CD4-positive, alpha-beta memory T cell (primary cell): ENCODE measurements at regions of chr16 and their contacts with region 1.

Region 1: GRCh38 chr16:67246934-67247697 is at the start of gene FHOD1:
- DNase-seq: peak; percentile 92 to 96 (median 93)
- H3K4me3 ChIP-seq: peak within 1 kb of the TSS; percentile 73 to 85
- H3K4me3 Mint-ChIP-seq: peak within 1 kb of the TSS; percentile 84 to 95 (median 91)
- H3K27ac ChIP-seq: peak within 1 kb of the TSS; percentile 82
- H3K27ac Mint-ChIP-seq: peak within 1 kb of the TSS; percentile 84 to 100 (median 95)
- H3K4me1 ChIP-seq: peaks cover 57% of the 10 kb centered on the region
- H3K4me1 Mint-ChIP-seq: peaks cover 26 to 61% (median 44%) of the 10 kb centered on the region in 4 donors
- H3K27me3 ChIP-seq: no peaks in the 10 kb centered on the region
- H3K27me3 Mint-ChIP-seq: peaks cover 1 to 3% of the 10 kb centered on the region in 2 donors
- total RNA-seq, gene FHOD1: 56.0 to 63.3 TPM

Region 2: DNA sequence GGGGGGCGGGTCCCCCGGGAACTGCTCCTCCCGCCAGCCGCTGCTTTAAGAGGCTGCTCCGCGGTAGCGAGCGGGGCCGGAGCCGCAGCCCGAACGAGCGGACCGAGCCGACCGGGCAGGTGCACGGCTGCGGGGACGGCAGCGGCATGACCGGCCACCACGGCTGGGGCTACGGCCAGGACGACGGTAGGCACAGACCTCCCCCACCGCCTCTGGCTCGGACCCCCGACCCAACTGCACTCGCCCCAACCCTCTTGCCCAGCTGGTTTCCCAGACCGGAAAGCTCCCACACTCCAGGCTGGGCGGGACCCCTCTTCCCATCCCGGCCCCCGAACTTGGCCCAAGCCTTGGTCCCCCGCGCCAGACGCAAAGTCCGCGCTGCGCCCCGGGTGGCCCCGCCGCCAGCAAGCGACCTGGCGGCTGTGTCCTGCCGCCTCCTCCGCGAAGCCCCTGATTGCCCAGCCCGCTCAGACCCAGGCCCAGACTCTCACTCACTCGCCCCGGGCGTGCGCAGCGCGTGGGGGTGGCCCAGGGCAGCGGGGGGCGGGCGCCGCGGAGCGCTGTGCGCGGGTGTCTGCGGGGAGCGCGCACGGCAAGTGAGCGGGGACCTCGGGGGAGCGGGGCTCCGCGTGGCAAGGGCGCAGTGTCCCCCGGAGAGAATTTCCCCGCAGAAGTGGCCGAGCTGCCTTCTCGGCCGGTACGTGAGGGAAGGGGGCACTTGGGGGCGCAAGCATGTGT is 402.6 kb before region 1 on chr16 and contains the start of gene CA7:
- CTCF ChIA-PET with region 1: no interaction called
- POLR2A ChIA-PET with region 1: no interaction called
- intact Hi-C with region 1: no loop called
- DNase-seq: no peak
- H3K4me3 ChIP-seq: no peak within 1 kb of the TSS
- H3K4me3 Mint-ChIP-seq: peak within 1 kb of the TSS in 7 of 8 donors; percentile 27 to 80 (median 68)
- H3K27ac ChIP-seq: no peak within 1 kb of the TSS
- H3K27ac Mint-ChIP-seq: no peak within 1 kb of the TSS
- H3K4me1 ChIP-seq: no peaks in the 10 kb centered on the region
- H3K4me1 Mint-ChIP-seq: peaks cover 2 to 10% (median 8%) of the 10 kb centered on the region in 4 donors
- H3K27me3 ChIP-seq: peaks cover 17% of the 10 kb centered on the region
- H3K27me3 Mint-ChIP-seq: peaks cover 31 to 33% of the 10 kb centered on the region in 2 donors
- total RNA-seq, gene CA7: not detected

Region 3: DNA sequence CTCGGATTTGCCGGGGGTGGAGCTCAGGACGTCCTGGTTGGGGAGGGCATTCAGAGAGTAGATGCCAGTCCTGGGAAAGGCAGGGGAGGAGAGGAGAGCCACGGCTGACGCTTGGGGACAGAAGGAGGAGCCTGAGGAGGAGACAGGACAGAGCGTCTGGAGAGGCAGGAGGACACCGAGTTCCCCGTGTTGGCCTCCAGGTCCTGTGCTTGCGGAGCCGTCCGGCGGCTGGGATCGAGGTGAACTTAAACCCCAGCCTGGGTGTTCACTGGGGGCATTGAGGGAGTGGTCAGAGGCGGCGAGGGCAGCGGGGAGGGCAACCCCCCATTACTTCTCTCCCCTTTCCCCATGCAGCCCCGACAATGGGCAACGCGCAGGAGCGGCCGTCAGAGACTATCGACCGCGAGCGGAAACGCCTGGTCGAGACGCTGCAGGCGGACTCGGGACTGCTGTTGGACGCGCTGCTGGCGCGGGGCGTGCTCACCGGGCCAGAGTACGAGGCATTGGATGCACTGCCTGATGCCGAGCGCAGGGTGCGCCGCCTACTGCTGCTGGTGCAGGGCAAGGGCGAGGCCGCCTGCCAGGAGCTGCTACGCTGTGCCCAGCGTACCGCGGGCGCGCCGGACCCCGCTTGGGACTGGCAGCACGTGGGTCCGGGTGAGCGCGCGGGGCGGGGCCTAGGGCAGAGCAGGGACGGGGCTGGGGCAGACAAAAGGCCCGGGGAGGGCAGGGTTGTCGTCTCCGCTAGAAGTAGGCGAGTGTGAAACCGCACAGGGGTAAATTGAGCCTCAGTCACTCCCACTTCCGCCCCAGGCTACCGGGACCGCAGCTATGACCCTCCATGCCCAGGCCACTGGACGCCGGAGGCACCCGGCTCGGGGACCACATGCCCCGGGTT is 73.1 kb before region 1 on chr16:
- CTCF ChIA-PET with region 1: no interaction called
- POLR2A ChIA-PET with region 1: no interaction called
- intact Hi-C with region 1: loop called (anchors 1 kb)
- DNase-seq: peak; percentile 61 to 78 (median 64)
- H3K4me3 ChIP-seq: peak overlapping the region; percentile 29 to 68
- H3K4me3 Mint-ChIP-seq: peak overlapping the region; percentile 81 to 95 (median 88)
- H3K27ac ChIP-seq: peak overlapping the region; percentile 20
- H3K27ac Mint-ChIP-seq: peak overlapping the region; percentile 61 to 96 (median 78)
- H3K4me1 ChIP-seq: peaks cover 49% of the 10 kb centered on the region
- H3K4me1 Mint-ChIP-seq: peaks cover 26 to 66% (median 37%) of the 10 kb centered on the region in 4 donors
- H3K27me3 ChIP-seq: peaks cover 14% of the 10 kb centered on the region
- H3K27me3 Mint-ChIP-seq: peaks cover 5 to 18% of the 10 kb centered on the region in 2 donors

Region 4: DNA sequence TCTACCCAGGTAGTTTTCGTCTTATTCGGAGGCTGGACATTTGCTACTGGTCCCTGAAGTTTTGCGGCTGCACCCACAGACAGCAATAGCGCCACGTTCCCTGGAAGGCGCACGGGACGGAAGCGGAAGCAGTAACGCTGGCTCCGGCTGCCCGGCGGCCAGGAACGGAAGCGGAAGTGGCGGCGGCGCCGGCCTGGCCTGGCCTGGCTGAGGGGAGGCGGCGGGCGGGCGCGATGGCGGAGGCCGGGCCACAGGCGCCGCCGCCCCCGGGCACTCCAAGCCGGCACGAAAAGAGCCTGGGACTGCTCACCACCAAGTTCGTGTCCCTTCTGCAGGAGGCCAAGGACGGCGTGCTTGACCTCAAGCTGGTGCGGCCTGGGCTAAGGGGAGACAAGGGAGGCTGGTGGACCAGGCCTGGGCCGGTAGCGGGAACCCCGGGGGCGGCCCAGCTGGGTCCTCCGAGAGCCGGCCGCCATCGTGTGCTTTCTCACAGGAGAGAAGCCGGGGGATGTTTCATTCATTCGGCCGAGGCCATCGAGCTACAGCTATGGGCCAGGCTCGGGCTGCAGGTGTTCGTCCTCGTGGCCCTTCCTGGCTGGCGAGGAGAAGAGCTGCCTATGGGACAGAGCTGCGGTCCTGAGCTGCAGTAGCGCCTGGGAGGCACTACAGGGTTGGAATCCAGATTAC is 55.0 kb before region 1 on chr16 and contains the start of gene E2F4:
- CTCF ChIA-PET with region 1: interaction called, 3 read pairs
- POLR2A ChIA-PET with region 1: interaction called, 11 read pairs
- intact Hi-C with region 1: loop called (anchors 2 kb)
- DNase-seq: peak; percentile 80 to 85 (median 83)
- H3K4me3 ChIP-seq: peak within 1 kb of the TSS; percentile 84 to 87
- H3K4me3 Mint-ChIP-seq: peak within 1 kb of the TSS; percentile 86 to 96 (median 90)
- H3K27ac ChIP-seq: peak within 1 kb of the TSS; percentile 80
- H3K27ac Mint-ChIP-seq: peak within 1 kb of the TSS; percentile 84 to 95 (median 91)
- H3K4me1 ChIP-seq: peaks cover 30% of the 10 kb centered on the region
- H3K4me1 Mint-ChIP-seq: peaks cover 24 to 50% (median 41%) of the 10 kb centered on the region in 4 donors
- H3K27me3 ChIP-seq: no peaks in the 10 kb centered on the region
- H3K27me3 Mint-ChIP-seq: no peaks in the 10 kb centered on the region
- total RNA-seq, gene E2F4: 87.3 to 91.3 TPM

Region 5: GRCh38 chr16:67198238-67198734 is 48.8 kb before region 1 on chr16:
- CTCF ChIA-PET with region 1: interaction called, 5 read pairs
- POLR2A ChIA-PET with region 1: interaction called, 11 read pairs
- intact Hi-C with region 1: loop called (anchors 2 kb)
- DNase-seq: peak in 1 of 5 donors; percentile 22
- H3K4me3 ChIP-seq: no peak overlapping the region
- H3K4me3 Mint-ChIP-seq: no peak overlapping the region
- H3K27ac ChIP-seq: no peak overlapping the region
- H3K27ac Mint-ChIP-seq: peak overlapping the region in 4 of 7 donors; percentile 53 to 78 (median 73)
- H3K4me1 ChIP-seq: peaks cover 11% of the 10 kb centered on the region
- H3K4me1 Mint-ChIP-seq: peaks cover 11 to 41% (median 28%) of the 10 kb centered on the region in 4 donors
- H3K27me3 ChIP-seq: no peaks in the 10 kb centered on the region
- H3K27me3 Mint-ChIP-seq: no peaks in the 10 kb centered on the region

Region 6: DNA sequence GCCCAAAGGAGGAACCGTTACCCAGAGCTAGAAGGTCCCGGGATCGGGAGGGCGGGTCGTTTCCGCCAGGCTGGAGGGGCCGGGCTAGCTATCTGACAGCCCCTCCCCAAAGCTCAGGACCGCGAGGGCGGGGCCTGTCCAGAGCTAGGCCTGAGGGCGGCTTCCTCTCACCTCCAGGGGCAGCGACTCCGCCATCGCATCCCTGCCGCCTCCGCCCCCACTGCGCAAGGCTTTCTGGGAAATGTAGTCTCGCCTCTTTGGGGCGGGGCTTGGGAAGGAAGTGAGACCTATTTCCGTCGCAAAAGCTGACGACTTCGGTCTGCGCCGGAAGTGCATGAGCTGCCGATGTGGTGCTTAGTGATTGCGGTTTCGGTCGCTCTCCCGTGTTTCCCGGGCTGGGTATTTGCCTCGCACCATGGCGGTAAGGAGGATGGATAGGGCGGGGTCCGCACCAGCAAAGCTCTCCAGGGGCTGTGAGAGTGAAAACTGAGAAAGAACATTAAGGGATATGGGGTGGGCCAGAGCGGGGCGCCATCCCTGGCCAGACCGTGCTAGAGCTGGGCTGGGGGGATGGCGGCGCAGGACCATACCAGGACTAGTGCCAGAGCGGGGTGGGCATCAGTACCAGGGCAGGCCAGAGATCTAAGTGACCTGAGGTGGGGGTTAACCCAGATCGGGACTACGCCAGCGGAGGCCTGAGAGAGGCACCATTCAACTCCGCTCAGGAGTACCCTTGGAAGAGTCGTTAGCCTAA is 20.1 kb before region 1 on chr16 and contains the start of gene TMEM208:
- CTCF ChIA-PET with region 1: interaction called, 15 read pairs
- POLR2A ChIA-PET with region 1: interaction called, 259 read pairs
- intact Hi-C with region 1: loop called (anchors 1 kb)
- DNase-seq: peak; percentile 95 to 99 (median 97)
- H3K4me3 ChIP-seq: peak within 1 kb of the TSS; percentile 73 to 99
- H3K4me3 Mint-ChIP-seq: peak within 1 kb of the TSS; percentile 98 to 100 (median 100)
- H3K27ac ChIP-seq: peak within 1 kb of the TSS; percentile 88
- H3K27ac Mint-ChIP-seq: peak within 1 kb of the TSS; percentile 96 to 100 (median 99)
- H3K4me1 ChIP-seq: peaks cover 51% of the 10 kb centered on the region
- H3K4me1 Mint-ChIP-seq: peaks cover 43 to 58% (median 54%) of the 10 kb centered on the region in 4 donors
- H3K27me3 ChIP-seq: no peaks in the 10 kb centered on the region
- H3K27me3 Mint-ChIP-seq: no peaks in the 10 kb centered on the region
- total RNA-seq, gene TMEM208: 35.5 to 35.7 TPM

Region 7: DNA sequence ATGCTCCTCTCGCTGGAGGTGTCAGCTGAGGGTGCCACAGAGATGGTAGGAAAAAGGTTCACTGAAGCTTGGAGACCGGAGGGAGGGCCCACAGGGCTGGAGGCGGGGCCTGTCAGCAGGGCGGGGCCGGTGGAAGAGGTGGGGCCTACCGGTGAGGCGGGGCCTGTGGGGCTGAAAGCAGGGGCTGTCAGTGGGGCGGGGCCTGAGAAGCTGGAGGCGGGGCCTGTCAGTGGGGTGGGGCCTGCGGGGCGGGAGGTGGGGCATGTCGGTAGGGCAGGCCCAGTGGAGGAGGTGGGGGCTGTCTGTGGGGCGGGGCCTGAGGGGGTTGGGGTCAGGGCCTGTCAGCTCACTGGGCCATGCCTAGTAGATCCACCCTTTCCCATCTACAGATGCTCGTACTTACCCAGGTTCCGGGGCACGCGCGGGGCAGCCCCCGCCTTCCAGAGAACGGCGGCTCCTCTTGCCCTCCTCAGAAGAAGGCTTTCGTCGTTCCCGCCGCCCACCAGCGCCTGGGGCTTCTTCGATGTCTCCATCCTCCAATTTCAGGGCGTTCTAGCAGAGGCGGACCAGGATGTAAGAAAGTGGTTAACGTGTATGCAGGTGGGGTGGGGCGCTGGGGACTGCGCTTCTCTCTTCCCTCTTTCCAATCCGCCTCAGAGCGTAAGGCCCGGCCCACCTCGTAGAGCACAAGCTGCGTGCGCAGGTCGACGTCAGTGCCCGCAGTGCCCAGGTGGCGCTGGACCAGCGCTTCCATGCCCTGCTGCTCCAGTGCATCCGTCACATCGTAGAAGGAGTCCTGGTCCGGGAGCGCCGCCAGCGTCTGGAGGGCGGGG is 10.3 kb before region 1 on chr16:
- CTCF ChIA-PET with region 1: interaction called, 7 read pairs
- POLR2A ChIA-PET with region 1: interaction called, 259 read pairs
- intact Hi-C with region 1: loop called (anchors 1 kb)
- DNase-seq: peak; percentile 83 to 87 (median 84)
- H3K4me3 ChIP-seq: peak overlapping the region; percentile 17
- H3K4me3 Mint-ChIP-seq: peak overlapping the region; percentile 71 to 88 (median 81)
- H3K27ac ChIP-seq: peak overlapping the region; percentile 56
- H3K27ac Mint-ChIP-seq: peak overlapping the region; percentile 92 to 99 (median 97)
- H3K4me1 ChIP-seq: peaks cover 13% of the 10 kb centered on the region
- H3K4me1 Mint-ChIP-seq: peaks cover 8 to 26% (median 14%) of the 10 kb centered on the region in 4 donors
- H3K27me3 ChIP-seq: no peaks in the 10 kb centered on the region
- H3K27me3 Mint-ChIP-seq: no peaks in the 10 kb centered on the region

Region 8: DNA sequence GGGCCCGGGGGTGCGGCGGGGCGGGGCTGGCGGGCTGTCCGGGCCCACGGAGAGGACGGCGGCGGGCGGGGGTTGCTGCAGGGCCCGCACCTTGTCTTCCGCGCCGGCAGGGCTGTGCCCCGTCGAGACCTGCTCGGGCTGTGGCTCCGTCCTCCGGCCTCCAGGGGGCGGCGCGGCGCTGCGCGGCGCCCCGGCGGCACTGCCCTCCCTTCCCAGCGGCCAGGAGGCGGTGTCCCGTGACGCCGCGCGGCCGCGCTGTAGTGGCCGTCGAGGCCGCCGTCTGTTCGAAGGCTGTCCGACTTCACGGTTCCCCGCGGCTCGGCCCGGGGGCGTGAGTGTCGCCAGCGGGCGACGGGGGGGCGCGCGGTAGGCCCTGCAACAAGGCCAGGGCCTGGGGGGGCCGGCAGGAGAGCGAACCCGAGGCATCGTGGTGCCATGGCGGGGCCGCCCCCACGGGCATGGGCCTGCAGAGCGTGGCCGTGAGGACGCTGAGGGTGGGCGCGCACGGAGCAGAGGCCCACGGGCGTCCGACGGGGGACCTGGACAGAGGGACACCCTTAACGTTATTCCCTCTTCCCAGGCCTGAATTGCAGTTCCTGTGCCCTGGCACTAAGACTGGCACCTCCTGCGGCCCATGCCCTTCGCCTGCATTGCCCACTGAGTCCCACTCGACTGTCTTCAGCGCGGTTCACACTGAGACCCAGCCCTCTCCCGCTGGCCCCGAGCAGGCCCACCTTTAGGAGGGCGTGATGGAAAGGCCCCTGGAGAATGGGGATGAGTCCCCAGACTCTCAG is 32.4 kb after region 1 on chr16 and contains the start of gene PLEKHG4:
- CTCF ChIA-PET with region 1: interaction called, 3 read pairs
- POLR2A ChIA-PET with region 1: interaction called, 4 read pairs
- intact Hi-C with region 1: loop called (anchors 1 kb)
- DNase-seq: peak; percentile 74 to 80 (median 78)
- H3K4me3 ChIP-seq: peak within 1 kb of the TSS; percentile 52 to 68
- H3K4me3 Mint-ChIP-seq: peak within 1 kb of the TSS; percentile 81 to 89 (median 84)
- H3K27ac ChIP-seq: peak within 1 kb of the TSS; percentile 40
- H3K27ac Mint-ChIP-seq: peak within 1 kb of the TSS; percentile 57 to 92 (median 78)
- H3K4me1 ChIP-seq: peaks cover 20% of the 10 kb centered on the region
- H3K4me1 Mint-ChIP-seq: peaks cover 3 to 26% (median 15%) of the 10 kb centered on the region in 4 donors
- H3K27me3 ChIP-seq: no peaks in the 10 kb centered on the region
- H3K27me3 Mint-ChIP-seq: no peaks in the 10 kb centered on the region
- total RNA-seq, gene PLEKHG4: 17.3 to 24.0 TPM

Region 9: DNA sequence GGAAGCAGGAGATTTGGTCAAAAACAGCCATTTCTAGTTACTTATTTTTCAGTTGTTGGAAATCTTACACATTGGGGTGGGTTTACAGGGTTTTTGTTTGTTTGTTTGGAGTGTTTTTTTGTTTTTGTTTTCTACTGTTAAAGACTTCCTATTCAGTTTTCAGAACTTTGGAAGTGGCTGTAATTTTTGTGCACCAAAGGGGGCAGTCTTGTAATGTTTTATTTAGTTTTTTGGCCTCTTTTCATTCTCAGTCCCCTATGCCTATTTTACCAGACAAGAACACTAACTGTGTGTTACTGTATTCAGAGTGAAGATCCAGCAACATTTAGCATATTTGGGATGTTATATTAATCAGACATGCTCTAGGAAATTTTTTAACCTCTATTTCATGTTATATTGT is 125.5 kb after region 1 on chr16:
- CTCF ChIA-PET with region 1: no interaction called
- POLR2A ChIA-PET with region 1: no interaction called
- intact Hi-C with region 1: no loop called
- DNase-seq: no peak
- H3K4me3 ChIP-seq: no peak overlapping the region
- H3K4me3 Mint-ChIP-seq: no peak overlapping the region
- H3K27ac ChIP-seq: no peak overlapping the region
- H3K27ac Mint-ChIP-seq: no peak overlapping the region
- H3K4me1 ChIP-seq: no peaks in the 10 kb centered on the region
- H3K4me1 Mint-ChIP-seq: no peaks in the 10 kb centered on the region
- H3K27me3 ChIP-seq: peaks cover 3% of the 10 kb centered on the region
- H3K27me3 Mint-ChIP-seq: peaks cover 2 to 10% of the 10 kb centered on the region in 2 donors